PC-3 (cell line): ENCODE measurements at regions of chr7 and their contacts with region 1.

Region 1: GRCh38 chr7:127667017-127667670 is 15.2 kb downstream of the SND1 start:
- DNase-seq: peak; percentile 88
- ATAC-seq: peak; percentile 93
- H3K4me3 ChIP-seq: peak overlapping the region; percentile 54
- H3K27ac ChIP-seq: peak overlapping the region; percentile 88
- H3K4me1 ChIP-seq: peaks cover 39% of the 10 kb centered on the region
- H3K27me3 ChIP-seq: no peaks in the 10 kb centered on the region
- CTCF ChIP-seq: no peak

Region 2: DNA sequence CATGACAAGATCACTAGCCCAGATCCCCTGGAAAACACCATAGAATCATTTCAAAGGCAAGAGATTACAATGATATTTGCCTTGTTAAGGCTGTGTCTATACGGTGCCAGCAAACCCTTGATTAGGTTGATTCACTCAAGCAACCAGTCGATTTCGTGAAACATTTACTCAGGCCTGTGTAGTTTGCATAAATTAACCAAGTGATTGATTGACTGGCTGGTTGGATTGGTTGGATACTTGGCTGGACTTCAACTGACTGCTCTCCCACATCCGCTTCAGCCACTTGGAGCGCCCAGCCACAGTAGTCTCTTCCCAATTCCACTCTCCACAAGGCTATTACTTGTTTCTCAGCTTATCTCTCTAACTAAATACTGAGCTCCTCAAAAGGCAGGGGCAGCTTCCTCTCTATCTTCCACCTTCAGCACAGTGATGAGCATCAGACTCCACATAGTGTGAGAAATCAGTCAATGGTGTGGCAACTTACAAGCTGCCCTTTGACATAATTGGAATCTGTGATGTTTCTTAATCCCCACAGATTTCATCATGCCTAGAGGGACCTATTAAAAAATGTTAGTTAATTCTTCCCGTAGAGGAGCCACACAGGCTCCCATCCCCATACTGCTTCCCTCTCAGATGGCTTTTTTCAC is 631.8 kb before region 1 on chr7:
- CTCF ChIA-PET with region 1: no interaction called
- POLR2A ChIA-PET with region 1: no interaction called
- intact Hi-C with region 1: no loop called
- DNase-seq: no peak
- ATAC-seq: no peak
- H3K4me3 ChIP-seq: no peak overlapping the region
- H3K27ac ChIP-seq: no peak overlapping the region
- H3K4me1 ChIP-seq: no peaks in the 10 kb centered on the region
- H3K27me3 ChIP-seq: no peaks in the 10 kb centered on the region
- CTCF ChIP-seq: no peak

Region 3: GRCh38 chr7:127294786-127295185 is 372.4 kb before region 1 on chr7:
- CTCF ChIA-PET with region 1: no interaction called
- POLR2A ChIA-PET with region 1: no interaction called
- intact Hi-C with region 1: no loop called
- DNase-seq: no peak
- ATAC-seq: no peak
- H3K4me3 ChIP-seq: no peak overlapping the region
- H3K27ac ChIP-seq: no peak overlapping the region
- H3K4me1 ChIP-seq: no peaks in the 10 kb centered on the region
- H3K27me3 ChIP-seq: no peaks in the 10 kb centered on the region
- CTCF ChIP-seq: no peak

Region 4: DNA sequence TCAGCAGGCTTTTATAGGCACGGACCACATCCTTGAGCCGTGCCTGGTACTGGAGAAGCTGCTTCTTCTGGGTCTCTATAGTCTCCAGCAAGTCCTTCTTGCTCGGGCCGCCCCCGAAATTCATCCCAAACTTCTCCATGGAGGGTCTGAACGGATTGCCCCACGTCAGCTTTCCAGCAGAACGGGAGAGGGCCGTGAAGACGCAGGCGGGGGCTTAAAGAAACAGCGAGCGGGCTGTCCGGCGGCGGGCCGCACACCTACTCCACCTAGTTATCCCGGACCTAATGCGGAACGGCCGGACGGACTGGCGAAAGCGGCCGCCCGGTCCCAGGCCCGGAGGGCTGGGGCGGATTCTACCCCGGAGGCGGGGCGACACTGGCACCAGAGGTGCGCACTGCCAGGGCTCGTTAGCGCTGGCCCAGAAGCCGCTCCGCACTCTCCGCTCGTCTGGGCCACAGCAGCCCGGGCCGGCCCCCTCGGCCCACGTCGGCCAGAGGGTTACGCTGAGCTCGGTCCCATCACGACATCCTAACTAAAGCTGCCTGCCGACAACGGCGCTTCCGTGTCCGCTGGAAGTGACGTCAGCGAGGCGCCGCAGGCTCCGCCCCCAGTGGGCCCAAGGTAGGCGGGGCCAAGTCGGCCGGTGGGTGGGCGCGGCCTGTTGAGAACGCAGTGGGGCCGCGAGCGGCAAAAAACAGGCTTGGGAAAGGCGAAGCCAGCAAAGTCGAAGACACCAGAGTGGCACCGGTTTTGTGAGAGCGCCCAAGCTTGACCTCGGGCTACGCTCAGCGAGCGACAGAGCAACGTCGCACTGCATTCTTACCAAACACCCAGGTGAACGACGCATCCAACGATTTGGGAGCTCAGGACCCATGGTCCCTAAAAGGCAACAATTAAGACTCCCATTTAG is 81.8 kb before region 1 on chr7 and contains the start of gene GCC1:
- CTCF ChIA-PET with region 1: no interaction called
- POLR2A ChIA-PET with region 1: interaction called, 4 read pairs
- intact Hi-C with region 1: loop called (anchors 5 kb)
- DNase-seq: peak; percentile 90
- ATAC-seq: peak; percentile 67
- H3K4me3 ChIP-seq: peak within 1 kb of the TSS; percentile 90
- H3K27ac ChIP-seq: peak within 1 kb of the TSS; percentile 46
- H3K4me1 ChIP-seq: peaks cover 27% of the 10 kb centered on the region
- H3K27me3 ChIP-seq: no peaks in the 10 kb centered on the region
- CTCF ChIP-seq: no peak
- total RNA-seq, gene GCC1: 11.2 and 11.9 TPM in 2 replicates

Region 5: GRCh38 chr7:127708788-127709187 is 41.6 kb after region 1 on chr7:
- CTCF ChIA-PET with region 1: interaction called, 10 read pairs
- POLR2A ChIA-PET with region 1: no interaction called
- intact Hi-C with region 1: no loop called
- DNase-seq: peak; percentile 80
- ATAC-seq: peak; percentile 53
- H3K4me3 ChIP-seq: no peak overlapping the region
- H3K27ac ChIP-seq: no peak overlapping the region
- H3K4me1 ChIP-seq: peaks cover 15% of the 10 kb centered on the region
- H3K27me3 ChIP-seq: no peaks in the 10 kb centered on the region
- CTCF ChIP-seq: peak; percentile 75